ENCODE measurements at regions of chr10 and their contacts with region 1.

Region 1: DNA sequence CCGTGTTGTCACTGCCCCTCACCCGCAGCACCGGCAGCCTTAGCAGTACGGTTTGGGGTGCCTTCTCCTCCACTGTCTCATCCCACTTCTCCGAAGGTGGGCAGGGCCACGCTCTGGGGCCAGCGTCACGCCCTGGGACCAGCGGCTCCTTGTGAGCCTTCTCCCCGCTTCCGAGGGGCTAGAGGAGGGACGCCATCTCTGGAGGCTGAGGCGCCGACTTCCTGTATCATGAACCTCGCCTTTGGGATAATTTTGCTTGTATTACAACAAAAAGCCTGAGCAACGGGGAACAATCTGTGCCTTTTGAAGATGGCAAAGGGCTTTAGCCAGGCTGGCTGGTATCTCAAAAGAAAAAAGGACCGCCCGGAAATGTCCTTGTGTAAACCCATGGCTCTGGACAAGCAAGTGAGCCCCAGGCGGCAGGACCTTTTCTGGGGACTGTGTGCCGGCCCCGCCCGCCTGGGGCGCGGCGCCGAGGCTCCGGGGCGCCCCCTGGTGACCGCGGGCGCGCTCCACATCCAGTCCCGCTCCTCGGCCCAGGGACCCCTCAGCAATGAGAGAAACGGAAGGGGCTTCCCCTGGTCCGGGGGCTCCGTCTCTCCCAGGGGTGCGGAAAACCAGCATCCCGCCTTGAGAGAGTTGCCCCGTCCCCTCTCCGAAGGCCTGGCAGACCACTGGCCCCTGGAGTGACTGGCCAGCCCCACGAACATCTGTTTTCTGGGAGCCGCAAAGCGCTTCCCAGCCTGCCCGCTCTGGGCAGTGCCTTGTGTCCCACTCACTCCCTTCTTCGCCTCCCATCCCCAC is 3.8 kb downstream of the DEPP1 start:
- DNase-seq: no peak
- ATAC-seq: peak; percentile 86
- H3K4me3 ChIP-seq: peak overlapping the region; percentile 67; the same call in 1 of the 2 replicates
- H3K27ac ChIP-seq: peak overlapping the region; percentile 80
- H3K4me1 ChIP-seq: peaks cover 50% of the 10 kb centered on the region
- H3K27me3 ChIP-seq: no peaks in the 10 kb centered on the region
- CTCF ChIP-seq: peak; percentile 78 to 95 (median 94); a peak in 5 of 6 replicates
- EP300 ChIP-seq: 0 out of 4 replicates have a peak, but pooled peaks of 1 of the 2 experiments have one; percentile 23
- POLR2A ChIP-seq: peak; percentile 46
- RAD21 ChIP-seq: peak; percentile 79

Region 2: DNA sequence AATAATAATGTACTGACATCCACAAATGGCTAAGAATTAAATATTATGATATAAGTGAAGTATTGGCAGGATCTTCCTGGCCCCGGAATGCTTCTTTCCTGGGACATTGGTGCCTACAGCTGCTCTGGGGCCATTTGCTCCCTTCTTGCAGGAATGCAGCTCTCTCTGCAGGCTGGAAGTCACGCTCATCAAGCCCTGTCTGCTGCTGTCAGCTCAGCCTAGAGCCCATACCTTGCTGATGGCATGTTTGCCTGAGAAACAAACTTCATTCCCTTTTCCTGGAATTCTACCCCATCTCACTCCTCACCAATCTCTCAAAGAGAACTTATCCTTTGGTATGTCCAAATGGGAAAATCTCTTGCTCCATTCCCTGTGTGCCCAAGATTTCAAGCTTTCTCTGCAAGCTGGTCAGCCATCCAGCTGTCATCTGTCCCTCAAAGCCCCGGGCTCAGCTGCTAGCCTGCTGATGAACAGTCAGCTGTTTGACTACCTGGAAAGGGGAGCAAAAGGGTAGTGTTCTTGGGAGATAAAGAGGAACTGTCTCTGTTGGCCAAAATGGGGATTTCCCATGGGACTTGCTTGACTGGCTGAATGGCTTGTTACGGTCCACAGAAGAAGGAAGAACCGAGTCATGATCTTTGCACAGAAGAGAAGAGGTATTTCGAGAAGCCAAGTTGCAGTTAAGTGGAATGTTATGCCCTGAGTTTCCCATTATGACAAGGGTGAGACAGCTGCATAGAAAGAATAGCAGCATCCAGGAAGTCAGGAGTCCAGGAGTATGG is 27.3 kb before region 1 on chr10:
- CTCF ChIA-PET with region 1: interaction called, 80 read pairs
- POLR2A ChIA-PET with region 1: interaction called, 174 read pairs
- RAD21 ChIA-PET with region 1: interaction called, 36 read pairs
- SMC1A ChIA-PET with region 1: interaction called, 21 read pairs
- in situ Hi-C with region 1: no loop called
- intact Hi-C with region 1: no loop called
- DNase-seq: peak; percentile 80
- ATAC-seq: peak; percentile 79
- H3K4me3 ChIP-seq: peak overlapping the region; percentile 16; the same call in 1 of the 2 replicates
- H3K27ac ChIP-seq: peak overlapping the region; percentile 67
- H3K4me1 ChIP-seq: peaks cover 51% of the 10 kb centered on the region
- H3K27me3 ChIP-seq: no peaks in the 10 kb centered on the region
- CTCF ChIP-seq: no peak
- EP300 ChIP-seq: no peak
- POLR2A ChIP-seq: no peak
- RAD21 ChIP-seq: no peak

Region 3: DNA sequence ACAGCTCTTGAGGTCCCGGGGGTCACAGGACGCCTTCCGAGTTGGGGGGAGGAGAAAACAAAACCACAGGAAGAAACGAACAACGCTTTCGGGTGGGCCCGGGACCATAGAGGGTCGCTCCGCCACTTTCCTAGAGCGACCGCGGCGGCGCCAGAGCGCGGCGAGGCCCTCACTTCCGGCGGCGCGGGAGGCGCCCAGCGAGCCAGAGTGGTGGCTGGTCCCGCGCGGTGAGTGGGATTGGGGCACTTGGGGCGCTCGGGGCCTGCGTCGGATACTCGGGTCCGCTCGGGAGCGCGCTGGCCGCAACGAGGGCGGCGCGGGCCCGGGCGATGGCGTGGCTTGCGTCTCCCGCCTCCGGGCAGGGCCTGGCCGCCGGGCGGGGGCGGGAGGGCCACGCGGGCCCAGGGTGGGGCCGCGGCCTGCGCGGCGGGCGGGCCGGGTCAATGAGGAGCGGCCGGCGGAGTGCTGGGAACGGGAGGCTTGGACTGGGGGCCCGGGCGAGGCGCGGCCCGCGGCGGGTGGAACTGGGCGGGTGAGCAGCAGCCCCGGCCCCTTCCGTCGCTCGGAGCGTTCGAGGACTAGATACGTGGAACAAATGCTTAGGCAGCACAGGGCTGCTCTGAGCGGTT is 26.0 kb after region 1 on chr10 and contains the start of gene ZNF22:
- CTCF ChIA-PET with region 1: interaction called, 5 read pairs
- POLR2A ChIA-PET with region 1: interaction called, 7 read pairs
- RAD21 ChIA-PET with region 1: interaction called, 7 read pairs
- SMC1A ChIA-PET with region 1: interaction called, 34 read pairs
- in situ Hi-C with region 1: no loop called
- intact Hi-C with region 1: no loop called
- DNase-seq: no peak
- ATAC-seq: peak; percentile 82
- H3K4me3 ChIP-seq: peak within 1 kb of the TSS; percentile 72
- H3K27ac ChIP-seq: peak within 1 kb of the TSS; percentile 74
- H3K4me1 ChIP-seq: peaks cover 10% of the 10 kb centered on the region
- H3K27me3 ChIP-seq: no peaks in the 10 kb centered on the region
- CTCF ChIP-seq: peak in 2 of 3 experiments; percentile 16 to 18; a peak in 3 of 6 replicates
- EP300 ChIP-seq: no peak
- POLR2A ChIP-seq: peak; percentile 88
- RAD21 ChIP-seq: no peak
- polyA plus RNA-seq, gene ZNF22: 47.4 to 74.4 TPM